ENCODE measurements at regions of chr6 and their contacts with region 1.

Region 1: GRCh38 chr6:170129691-170130171 is 161.1 kb downstream of the DLL1 start:
- DNase-seq: peak; percentile 86
- ATAC-seq: peak; percentile 89

Region 2: GRCh38 chr6:170049641-170050561 is 79.8 kb before region 1 on chr6:
- intact Hi-C with region 1: loop called (anchors 2 kb)
- DNase-seq: peak; percentile 90
- ATAC-seq: peak; percentile 93